BJ (cell line): ENCODE measurements at regions of chr11 and their contacts with region 1.

Region 1: GRCh38 chr11:69101115-69101791 is 52.5 kb downstream of the TPCN2 start:
- DNase-seq: no peak
- H3K4me3 ChIP-seq: no peak overlapping the region
- H3K27me3 ChIP-seq: no peaks in the 10 kb centered on the region
- CTCF ChIP-seq: peak; percentile 100

Region 2: DNA sequence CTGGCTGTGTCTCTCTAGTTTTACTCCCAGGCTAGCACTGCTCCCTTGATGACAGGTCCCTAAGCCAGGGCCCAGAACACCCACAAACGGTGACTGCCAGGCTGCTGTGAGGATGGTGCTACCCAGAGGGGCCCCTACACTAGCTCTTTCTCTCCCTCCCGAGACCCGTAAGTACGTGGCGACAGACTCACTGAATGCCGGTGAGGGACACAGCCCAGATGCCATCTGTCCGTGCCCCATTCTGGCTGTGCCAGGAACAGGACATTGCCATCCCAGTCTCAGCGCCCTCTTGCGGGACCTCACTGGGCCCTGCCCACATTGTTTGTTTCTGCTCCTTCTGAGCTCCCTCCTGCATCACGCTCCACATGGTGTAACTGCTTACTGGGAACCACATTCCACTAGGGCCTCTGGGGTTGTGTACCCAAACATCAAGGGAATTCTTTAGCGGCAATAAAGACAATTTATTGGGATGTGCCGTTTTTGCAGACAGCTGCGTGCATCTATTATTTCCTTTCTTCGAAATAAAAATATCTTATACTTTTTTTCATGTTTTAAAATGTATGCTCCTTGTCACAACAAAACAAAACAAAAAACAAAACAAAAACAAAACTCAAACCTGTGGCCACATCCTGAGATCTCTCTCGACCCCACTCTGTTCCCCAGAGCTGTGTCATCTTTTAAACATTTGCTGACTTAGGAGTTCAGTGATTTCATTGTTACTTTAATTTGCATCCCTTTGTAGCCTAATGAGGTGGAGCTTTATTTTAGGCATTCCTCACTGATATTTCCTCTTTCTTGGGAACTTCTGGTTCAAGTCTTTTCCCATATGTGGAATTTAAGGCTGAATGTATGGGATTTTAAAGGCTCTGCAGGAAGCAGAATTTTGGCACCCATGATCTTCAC is 56.9 kb before region 1 on chr11:
- CTCF ChIA-PET with region 1: no interaction called
- POLR2A ChIA-PET with region 1: no interaction called
- DNase-seq: peak; percentile 66
- H3K4me3 ChIP-seq: no peak overlapping the region
- H3K27me3 ChIP-seq: no peaks in the 10 kb centered on the region
- CTCF ChIP-seq: peak; percentile 87

Region 3: GRCh38 chr11:69088676-69089146 is 12.5 kb before region 1 on chr11:
- CTCF ChIA-PET with region 1: interaction called, 10 read pairs
- POLR2A ChIA-PET with region 1: no interaction called
- DNase-seq: peak; percentile 23
- H3K4me3 ChIP-seq: no peak overlapping the region
- H3K27me3 ChIP-seq: no peaks in the 10 kb centered on the region
- CTCF ChIP-seq: peak; percentile 80

Region 4: DNA sequence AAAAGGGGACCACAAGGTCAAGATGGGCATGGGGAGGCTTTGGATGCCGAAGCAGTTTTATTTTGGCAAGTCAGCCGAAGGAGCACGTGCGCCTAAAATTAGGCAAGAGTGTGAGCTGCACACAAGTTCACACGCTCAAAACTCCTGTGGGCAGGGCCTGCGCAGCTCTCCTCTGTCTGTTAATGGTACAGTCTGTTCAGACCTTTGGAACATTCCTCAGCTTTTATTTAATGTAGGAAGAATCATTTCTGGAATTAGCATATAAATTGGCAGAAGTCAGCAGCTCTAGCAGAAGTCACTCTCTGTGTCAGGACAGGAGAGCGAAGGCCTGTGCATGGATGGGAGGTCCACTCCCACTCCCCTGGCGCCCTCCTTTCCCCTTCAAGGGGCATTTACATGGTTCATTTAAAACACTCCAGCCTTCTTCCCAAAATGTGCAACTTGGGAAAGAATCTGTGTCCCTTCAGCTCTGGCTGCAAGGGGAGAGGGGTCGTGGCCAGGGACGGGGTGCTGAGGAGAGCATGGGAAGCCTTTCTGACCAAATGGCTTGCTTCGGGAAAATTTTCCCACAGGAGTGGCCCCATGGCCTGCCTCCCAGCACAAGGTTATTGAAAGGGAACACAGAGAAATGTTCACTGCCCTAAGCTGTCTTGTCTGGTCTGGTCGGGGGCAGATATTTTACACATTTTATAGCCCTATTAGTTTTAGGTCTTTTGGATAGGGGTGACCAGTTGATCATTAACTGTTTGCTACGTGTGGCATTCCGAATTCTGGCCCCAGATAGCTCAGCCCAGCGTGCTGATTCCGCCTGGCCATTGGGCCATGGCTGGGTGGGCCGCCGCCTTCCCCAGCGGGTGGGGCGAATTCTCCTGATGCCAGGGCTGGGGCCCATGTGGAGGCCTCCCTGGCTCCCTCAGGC is 10.6 kb after region 1 on chr11:
- CTCF ChIA-PET with region 1: interaction called, 12 read pairs
- POLR2A ChIA-PET with region 1: no interaction called
- DNase-seq: no peak
- H3K4me3 ChIP-seq: no peak overlapping the region
- H3K27me3 ChIP-seq: 0 out of 2 replicates have a peak, but pooled peaks cover 7% of the 10 kb centered on the region
- CTCF ChIP-seq: no peak

Region 5: GRCh38 chr11:69192301-69192721 is 91.1 kb after region 1 on chr11:
- CTCF ChIA-PET with region 1: no interaction called
- POLR2A ChIA-PET with region 1: no interaction called
- DNase-seq: no peak
- H3K4me3 ChIP-seq: no peak overlapping the region
- H3K27me3 ChIP-seq: peaks cover 4% of the 10 kb centered on the region
- CTCF ChIP-seq: no peak

Region 6: DNA sequence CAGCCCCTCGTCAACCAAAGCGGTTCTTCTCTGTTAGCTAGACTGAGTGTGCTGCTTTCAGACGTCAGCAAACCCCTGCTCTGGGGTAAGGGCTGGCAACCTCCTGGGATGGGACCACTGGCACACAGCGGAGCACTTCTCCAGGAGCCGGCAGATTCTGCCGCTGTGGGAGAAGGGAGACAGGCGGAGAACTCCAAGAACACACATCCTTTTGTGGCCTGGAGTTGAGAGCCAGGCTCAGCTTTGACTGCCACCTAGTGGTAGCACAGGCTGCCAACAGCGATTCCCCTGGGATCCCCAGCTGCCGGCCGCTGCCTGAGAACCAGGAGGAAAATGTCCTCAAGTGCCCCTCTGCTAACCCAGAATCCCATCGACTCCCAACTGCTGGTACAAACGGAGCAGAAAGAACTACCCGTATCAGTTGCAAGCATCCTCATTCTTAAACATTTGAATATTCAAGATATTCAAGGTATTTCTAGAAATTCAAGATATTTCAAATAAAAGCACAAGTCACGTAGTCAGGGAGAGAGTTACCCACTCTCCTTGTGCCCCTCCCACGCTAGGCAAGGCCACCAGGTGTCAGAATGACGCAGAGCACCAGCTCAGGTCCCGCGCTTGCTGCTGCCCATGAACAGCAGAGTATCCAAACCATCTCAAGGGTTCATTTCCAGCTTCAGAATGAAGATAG is 569.0 kb after region 1 on chr11:
- CTCF ChIA-PET with region 1: interaction called, 94 read pairs
- POLR2A ChIA-PET with region 1: no interaction called
- DNase-seq: no peak
- H3K4me3 ChIP-seq: no peak overlapping the region
- H3K27me3 ChIP-seq: no peaks in the 10 kb centered on the region
- CTCF ChIP-seq: peak; percentile 97